Activated CD4-positive, alpha-beta T cell treated with anti-CD3 and anti-CD28 coated beads for 36 hours (primary cell): ENCODE measurements at regions of chr9 and their contacts with region 1.

Region 1: GRCh38 chr9:93095205-93096130 is 549 bp upstream of the CARD19 start:
- DNase-seq: peak; percentile 100
- ATAC-seq: peak; percentile 79
- H3K4me3 Mint-ChIP-seq: peak overlapping the region; percentile 80
- H3K27ac Mint-ChIP-seq: peak overlapping the region; percentile 98
- H3K4me1 Mint-ChIP-seq: peaks cover 77% of the 10 kb centered on the region
- H3K27me3 Mint-ChIP-seq: no peaks in the 10 kb centered on the region

Region 2: DNA sequence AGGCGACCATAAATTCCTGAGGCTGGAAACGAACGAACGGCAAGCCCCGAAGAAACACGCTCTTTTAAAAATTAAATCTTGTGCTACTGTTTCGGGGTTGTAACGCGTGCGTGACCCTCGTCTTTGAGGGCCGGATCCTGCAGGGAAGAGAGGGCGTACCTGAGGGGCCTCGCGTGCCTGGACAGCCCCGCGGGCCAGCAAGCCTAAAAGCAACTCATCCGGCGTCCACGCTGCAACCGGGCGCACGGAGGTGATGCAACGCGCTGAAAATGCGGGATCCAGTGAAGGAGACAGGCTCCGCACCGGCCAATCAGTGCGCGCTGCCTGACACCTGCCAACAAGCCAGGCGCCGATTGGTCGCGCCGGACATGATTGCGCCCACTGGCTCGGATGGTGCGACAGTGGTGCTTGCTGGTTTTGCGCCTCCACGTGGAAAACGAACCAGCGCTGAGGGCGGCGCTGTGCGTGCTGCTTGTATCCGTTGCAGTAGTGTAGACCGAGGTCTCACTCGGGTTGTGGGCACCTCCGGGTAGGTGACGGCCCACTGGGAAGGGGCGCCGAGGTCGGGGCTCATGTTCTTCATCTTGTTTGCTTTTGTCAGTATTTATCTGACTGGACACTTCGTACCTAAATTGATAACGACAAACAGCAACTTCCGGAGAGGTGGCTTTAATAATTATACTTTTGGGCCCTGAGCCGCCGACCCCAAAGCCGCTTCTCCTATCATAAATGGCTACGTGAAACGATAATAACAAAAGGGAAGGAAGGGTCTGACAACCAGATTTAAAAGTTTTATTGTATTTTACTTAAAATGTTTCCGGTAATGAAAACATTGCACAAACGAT is 801.8 kb before region 1 on chr9 and contains the start of gene IARS1:
- CTCF ChIA-PET with region 1: no interaction called
- POLR2A ChIA-PET with region 1: no interaction called
- intact Hi-C with region 1: loop called in 1 of 2 experiments (anchors 10 kb)
- DNase-seq: peak; percentile 99
- ATAC-seq: peak; percentile 95
- H3K4me3 Mint-ChIP-seq: peak within 1 kb of the TSS; percentile 87
- H3K27ac Mint-ChIP-seq: peak within 1 kb of the TSS; percentile 98
- H3K4me1 Mint-ChIP-seq: peaks cover 56% of the 10 kb centered on the region
- H3K27me3 Mint-ChIP-seq: no peaks in the 10 kb centered on the region
- total RNA-seq, gene IARS1: 261 to 286 TPM

Region 3: GRCh38 chr9:92877531-92878430 is 217.7 kb before region 1 on chr9 and contains the start of gene ZNF484:
- CTCF ChIA-PET with region 1: no interaction called
- POLR2A ChIA-PET with region 1: no interaction called
- intact Hi-C with region 1: loop called in 1 of 2 experiments (anchors 1 kb)
- DNase-seq: peak; percentile 98
- ATAC-seq: peak; percentile 97
- H3K4me3 Mint-ChIP-seq: peak within 1 kb of the TSS; percentile 99
- H3K27ac Mint-ChIP-seq: peak within 1 kb of the TSS; percentile 97
- H3K4me1 Mint-ChIP-seq: peaks cover 46% of the 10 kb centered on the region
- H3K27me3 Mint-ChIP-seq: no peaks in the 10 kb centered on the region
- total RNA-seq, gene ZNF484: 7.2 to 9.8 TPM

Region 4: GRCh38 chr9:93028448-93029006 is 66.9 kb before region 1 on chr9:
- CTCF ChIA-PET with region 1: no interaction called
- POLR2A ChIA-PET with region 1: interaction called, 3 read pairs
- intact Hi-C with region 1: loop called in 1 of 2 experiments (anchors 2 kb)
- DNase-seq: peak; percentile 71
- ATAC-seq: peak; percentile 86
- H3K4me3 Mint-ChIP-seq: peak overlapping the region; percentile 51
- H3K27ac Mint-ChIP-seq: peak overlapping the region; percentile 96
- H3K4me1 Mint-ChIP-seq: peaks cover 80% of the 10 kb centered on the region
- H3K27me3 Mint-ChIP-seq: no peaks in the 10 kb centered on the region

Region 5: DNA sequence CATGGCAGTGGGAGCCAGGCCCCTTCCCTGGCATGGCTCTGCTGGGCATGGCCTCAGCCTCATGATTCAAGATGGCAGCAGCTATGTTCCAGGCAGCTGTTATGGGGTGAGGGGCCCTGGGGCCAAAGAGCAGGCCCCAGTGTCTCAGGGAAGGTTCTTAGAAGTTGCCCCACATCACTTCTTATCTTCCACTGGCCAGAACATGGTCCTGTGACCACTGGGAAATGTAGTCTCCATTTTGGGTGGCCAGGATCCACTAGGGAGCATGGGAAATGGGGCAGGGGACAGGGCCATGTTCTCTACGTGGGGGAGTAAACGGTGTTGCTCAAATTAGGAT is 18.7 kb before region 1 on chr9:
- CTCF ChIA-PET with region 1: no interaction called
- POLR2A ChIA-PET with region 1: no interaction called
- intact Hi-C with region 1: no loop called
- DNase-seq: no peak
- ATAC-seq: no peak
- H3K4me3 Mint-ChIP-seq: no peak overlapping the region
- H3K27ac Mint-ChIP-seq: no peak overlapping the region
- H3K4me1 Mint-ChIP-seq: peaks cover 48% of the 10 kb centered on the region
- H3K27me3 Mint-ChIP-seq: no peaks in the 10 kb centered on the region

Region 6: GRCh38 chr9:93134015-93134739 is 38.7 kb after region 1 on chr9 and contains the start of gene NINJ1:
- CTCF ChIA-PET with region 1: no interaction called
- POLR2A ChIA-PET with region 1: interaction called, 3 read pairs
- intact Hi-C with region 1: loop called (anchors 1 to 2 kb)
- DNase-seq: peak; percentile 95
- ATAC-seq: peak; percentile 83
- H3K4me3 Mint-ChIP-seq: peak within 1 kb of the TSS; percentile 88
- H3K27ac Mint-ChIP-seq: peak within 1 kb of the TSS; percentile 92
- H3K4me1 Mint-ChIP-seq: peaks cover 63% of the 10 kb centered on the region
- H3K27me3 Mint-ChIP-seq: no peaks in the 10 kb centered on the region
- total RNA-seq, gene NINJ1: 77.4 to 108 TPM